Naive thymus-derived CD4-positive, alpha-beta T cell (primary cell): ENCODE measurements at regions of chr19 and their contacts with region 1.

Region 1: GRCh38 chr19:17336872-17337722 is at the start of gene GTPBP3:
- DNase-seq: peak; percentile 84 to 99 (median 95)
- ATAC-seq: peak; percentile 96
- H3K4me3 ChIP-seq: peak within 1 kb of the TSS; percentile 76
- H3K4me3 Mint-ChIP-seq: peak within 1 kb of the TSS; percentile 86 to 96 (median 92)
- H3K27ac ChIP-seq: peak within 1 kb of the TSS; percentile 79
- H3K27ac Mint-ChIP-seq: peak within 1 kb of the TSS; percentile 78 to 95 (median 93)
- H3K4me1 ChIP-seq: peaks cover 16 to 22% of the 10 kb centered on the region in 2 donors
- H3K4me1 Mint-ChIP-seq: peaks cover 22 to 55% (median 27%) of the 10 kb centered on the region in 7 donors
- H3K27me3 ChIP-seq: no peaks in the 10 kb centered on the region
- H3K27me3 Mint-ChIP-seq: no peaks in the 10 kb centered on the region
- total RNA-seq, gene GTPBP3: 29.6 to 59.8 (median 40.4) TPM

Region 2: DNA sequence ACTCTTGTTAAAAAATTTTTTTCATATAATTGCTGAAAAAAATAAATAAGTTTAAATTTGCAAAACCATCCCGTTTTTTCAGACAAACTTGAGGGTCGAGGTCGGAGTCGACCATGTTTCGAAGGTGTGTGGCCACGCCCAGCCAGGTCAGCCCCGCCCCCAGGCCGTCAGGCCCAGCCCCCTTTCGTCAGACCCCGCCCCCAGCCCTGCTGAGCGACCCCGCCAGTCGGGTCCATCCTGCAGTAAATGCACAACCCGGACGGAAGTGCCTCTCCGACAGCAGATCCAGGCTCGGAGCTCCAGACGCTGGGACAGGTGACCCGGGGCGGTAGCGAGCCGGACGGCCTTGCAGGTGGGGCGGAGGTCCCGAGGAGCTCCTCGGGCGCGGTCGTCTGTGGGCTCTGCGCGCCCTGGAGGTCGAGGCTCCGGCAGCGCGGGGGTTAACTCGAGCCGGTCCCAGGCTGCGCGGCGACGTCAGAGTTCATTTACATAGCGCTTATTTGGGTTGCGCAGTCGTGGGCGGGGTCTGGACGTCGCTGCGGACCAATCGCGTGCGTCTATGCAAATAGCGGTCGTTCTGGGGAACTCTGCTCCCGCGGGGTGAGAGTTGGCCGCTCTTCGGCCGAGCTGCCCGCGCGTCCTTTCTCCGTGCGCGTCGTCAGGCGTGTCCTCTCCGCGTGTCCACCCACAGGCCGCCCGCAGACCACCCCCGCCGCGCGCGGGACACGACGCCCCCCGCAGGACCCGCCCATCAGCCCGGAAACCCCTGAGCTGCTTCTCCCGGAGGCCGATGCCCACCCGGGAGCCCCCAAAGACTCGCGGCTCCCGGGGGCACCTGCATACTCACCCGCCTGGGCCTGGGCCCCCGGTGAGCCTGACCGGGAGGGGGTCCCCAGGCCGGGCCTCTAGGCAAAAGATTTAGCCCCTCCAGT is 110.8 kb before region 1 on chr19 and contains the start of gene OCEL1:
- CTCF ChIA-PET with region 1: no interaction called
- POLR2A ChIA-PET with region 1: interaction called, 3 read pairs
- intact Hi-C with region 1: loop called in 1 of 2 experiments (anchors 1 kb)
- DNase-seq: peak; percentile 91 to 98 (median 97)
- ATAC-seq: peak; percentile 94
- H3K4me3 ChIP-seq: peak within 1 kb of the TSS; percentile 98
- H3K4me3 Mint-ChIP-seq: peak within 1 kb of the TSS; percentile 82 to 98 (median 94)
- H3K27ac ChIP-seq: peak within 1 kb of the TSS; percentile 81
- H3K27ac Mint-ChIP-seq: peak within 1 kb of the TSS; percentile 86 to 99 (median 97)
- H3K4me1 ChIP-seq: peaks cover 0 to 2% of the 10 kb centered on the region in 2 donors
- H3K4me1 Mint-ChIP-seq: peaks cover 3 to 8% (median 5%) of the 10 kb centered on the region in 7 donors
- H3K27me3 ChIP-seq: no peaks in the 10 kb centered on the region
- H3K27me3 Mint-ChIP-seq: no peaks in the 10 kb centered on the region
- total RNA-seq, gene OCEL1: 21.8 to 32.8 (median 29.8) TPM

Region 3: GRCh38 chr19:17305517-17306284 is 31.4 kb before region 1 on chr19 and contains the start of gene MRPL34:
- CTCF ChIA-PET with region 1: interaction called, 6 read pairs
- POLR2A ChIA-PET with region 1: interaction called, 56 read pairs
- intact Hi-C with region 1: loop called (anchors 1 kb)
- DNase-seq: peak; percentile 81 to 96 (median 93)
- ATAC-seq: peak; percentile 65
- H3K4me3 ChIP-seq: peak within 1 kb of the TSS; percentile 93
- H3K4me3 Mint-ChIP-seq: peak within 1 kb of the TSS; percentile 82 to 94 (median 90)
- H3K27ac ChIP-seq: peak within 1 kb of the TSS; percentile 81
- H3K27ac Mint-ChIP-seq: peak within 1 kb of the TSS; percentile 82 to 93 (median 90)
- H3K4me1 ChIP-seq: peaks cover 22 to 32% of the 10 kb centered on the region in 2 donors
- H3K4me1 Mint-ChIP-seq: peaks cover 28 to 64% (median 57%) of the 10 kb centered on the region in 7 donors
- H3K27me3 ChIP-seq: no peaks in the 10 kb centered on the region
- H3K27me3 Mint-ChIP-seq: no peaks in the 10 kb centered on the region
- total RNA-seq, gene MRPL34: 37.0 to 76.0 (median 73.3) TPM

Region 4: GRCh38 chr19:17405250-17406038 is 68.3 kb after region 1 on chr19 and contains the start of gene BST2:
- CTCF ChIA-PET with region 1: no interaction called
- POLR2A ChIA-PET with region 1: no interaction called
- intact Hi-C with region 1: loop called in 1 of 2 experiments (anchors 5 kb)
- DNase-seq: peak in 6 of 9 donors; percentile 20 to 69 (median 50)
- ATAC-seq: peak; percentile 90
- H3K4me3 ChIP-seq: peak within 1 kb of the TSS; percentile 81
- H3K4me3 Mint-ChIP-seq: peak within 1 kb of the TSS; percentile 80 to 98 (median 95)
- H3K27ac ChIP-seq: peak within 1 kb of the TSS; percentile 83
- H3K27ac Mint-ChIP-seq: peak within 1 kb of the TSS; percentile 81 to 98 (median 88)
- H3K4me1 ChIP-seq: peaks cover 0 to 12% of the 10 kb centered on the region in 2 donors
- H3K4me1 Mint-ChIP-seq: peaks cover 20 to 47% (median 35%) of the 10 kb centered on the region in 7 donors
- H3K27me3 ChIP-seq: no peaks in the 10 kb centered on the region
- H3K27me3 Mint-ChIP-seq: peaks cover 0 to 2% (median 0%) of the 10 kb centered on the region in 5 donors
- total RNA-seq, gene BST2: 29.9 to 221 (median 57.1) TPM

Region 5: GRCh38 chr19:17555480-17555928 is 218.4 kb after region 1 on chr19 and contains the start of gene COLGALT1:
- CTCF ChIA-PET with region 1: no interaction called
- POLR2A ChIA-PET with region 1: no interaction called
- intact Hi-C with region 1: loop called in 1 of 2 experiments (anchors 2 kb)
- DNase-seq: peak; percentile 92 to 99 (median 96)
- ATAC-seq: peak; percentile 99
- H3K4me3 ChIP-seq: peak within 1 kb of the TSS; percentile 81
- H3K4me3 Mint-ChIP-seq: peak within 1 kb of the TSS; percentile 73 to 90 (median 84)
- H3K27ac ChIP-seq: peak within 1 kb of the TSS; percentile 76
- H3K27ac Mint-ChIP-seq: peak within 1 kb of the TSS in 6 of 9 donors; percentile 36 to 80 (median 66)
- H3K4me1 ChIP-seq: peaks cover 16% of the 10 kb centered on the region in 2 donors
- H3K4me1 Mint-ChIP-seq: peaks cover 8 to 29% (median 20%) of the 10 kb centered on the region in 7 donors
- H3K27me3 ChIP-seq: no peaks in the 10 kb centered on the region
- H3K27me3 Mint-ChIP-seq: no peaks in the 10 kb centered on the region
- total RNA-seq, gene COLGALT1: 50.1 to 70.6 (median 61.3) TPM